Caco-2 (cell line): ENCODE measurements at regions of chr18 and their contacts with region 1.

Region 1: DNA sequence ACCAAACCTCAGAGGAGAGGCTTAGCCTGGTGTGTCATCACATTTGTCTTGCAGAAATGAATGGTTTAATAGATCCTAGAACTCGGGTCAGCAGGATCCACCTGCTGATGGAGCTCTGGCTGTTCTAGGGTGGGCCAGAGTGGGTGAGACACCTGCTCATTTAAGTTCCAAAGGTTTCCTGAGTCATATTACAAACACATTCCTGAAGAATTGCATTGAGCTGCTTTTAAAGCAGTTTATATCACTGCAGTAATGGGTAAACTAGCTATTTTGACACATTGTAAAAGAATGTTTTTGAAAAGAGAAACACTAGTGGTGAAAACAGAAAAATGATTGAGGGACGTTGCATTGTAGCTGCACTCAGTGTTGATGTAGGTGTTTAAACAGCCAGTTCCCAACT is 175.3 kb upstream of the TCF4 start:
- DNase-seq: peak; percentile 60 to 66
- H3K4me3 ChIP-seq: no peak overlapping the region
- H3K4me3 Mint-ChIP-seq: peak overlapping the region; percentile 6
- H3K27ac Mint-ChIP-seq: peak overlapping the region; percentile 81
- H3K4me1 ChIP-seq: peaks cover 42% of the 10 kb centered on the region
- H3K4me1 Mint-ChIP-seq: peaks cover 35% of the 10 kb centered on the region
- H3K27me3 ChIP-seq: no peaks in the 10 kb centered on the region
- H3K27me3 Mint-ChIP-seq: no peaks in the 10 kb centered on the region
- CTCF ChIP-seq: no peak

Region 2: DNA sequence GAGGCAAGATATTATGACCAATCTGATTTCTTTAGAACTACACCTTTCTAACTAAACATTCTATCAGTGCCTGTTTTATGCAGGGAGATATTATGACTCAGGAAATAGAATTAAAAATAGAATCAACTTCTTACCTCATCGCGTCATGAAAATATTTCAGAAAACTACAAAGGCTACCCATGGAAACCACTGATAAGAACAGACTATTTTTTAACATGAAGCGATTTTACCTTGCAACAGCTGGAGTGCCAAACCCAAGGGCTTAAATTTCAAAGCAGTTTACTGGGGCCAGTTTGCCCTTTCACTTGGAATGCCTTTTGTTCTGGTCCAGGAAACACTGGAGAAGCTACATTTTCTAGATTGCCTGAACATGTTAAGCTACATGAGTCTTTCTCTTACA is 499.2 kb before region 1 on chr18:
- CTCF ChIA-PET with region 1: no interaction called
- POLR2A ChIA-PET with region 1: no interaction called
- intact Hi-C with region 1: loop called (anchors 5 kb)
- DNase-seq: peak; percentile 49 to 50
- H3K4me3 ChIP-seq: no peak overlapping the region
- H3K4me3 Mint-ChIP-seq: no peak overlapping the region
- H3K27ac Mint-ChIP-seq: peak overlapping the region; percentile 48
- H3K4me1 ChIP-seq: peaks cover 66% of the 10 kb centered on the region
- H3K4me1 Mint-ChIP-seq: peaks cover 8% of the 10 kb centered on the region
- H3K27me3 ChIP-seq: no peaks in the 10 kb centered on the region
- H3K27me3 Mint-ChIP-seq: no peaks in the 10 kb centered on the region
- CTCF ChIP-seq: no peak

Region 3: GRCh38 chr18:55577812-55578539 is 185.3 kb before region 1 on chr18:
- CTCF ChIA-PET with region 1: no interaction called
- POLR2A ChIA-PET with region 1: no interaction called
- intact Hi-C with region 1: loop called (anchors 5 kb)
- DNase-seq: no peak
- H3K4me3 ChIP-seq: no peak overlapping the region
- H3K4me3 Mint-ChIP-seq: no peak overlapping the region
- H3K27ac Mint-ChIP-seq: no peak overlapping the region
- H3K4me1 ChIP-seq: peaks cover 34% of the 10 kb centered on the region
- H3K4me1 Mint-ChIP-seq: peaks cover 8% of the 10 kb centered on the region
- H3K27me3 ChIP-seq: no peaks in the 10 kb centered on the region
- H3K27me3 Mint-ChIP-seq: no peaks in the 10 kb centered on the region
- CTCF ChIP-seq: peak in 1 of 2 experiments; percentile 16

Region 4: DNA sequence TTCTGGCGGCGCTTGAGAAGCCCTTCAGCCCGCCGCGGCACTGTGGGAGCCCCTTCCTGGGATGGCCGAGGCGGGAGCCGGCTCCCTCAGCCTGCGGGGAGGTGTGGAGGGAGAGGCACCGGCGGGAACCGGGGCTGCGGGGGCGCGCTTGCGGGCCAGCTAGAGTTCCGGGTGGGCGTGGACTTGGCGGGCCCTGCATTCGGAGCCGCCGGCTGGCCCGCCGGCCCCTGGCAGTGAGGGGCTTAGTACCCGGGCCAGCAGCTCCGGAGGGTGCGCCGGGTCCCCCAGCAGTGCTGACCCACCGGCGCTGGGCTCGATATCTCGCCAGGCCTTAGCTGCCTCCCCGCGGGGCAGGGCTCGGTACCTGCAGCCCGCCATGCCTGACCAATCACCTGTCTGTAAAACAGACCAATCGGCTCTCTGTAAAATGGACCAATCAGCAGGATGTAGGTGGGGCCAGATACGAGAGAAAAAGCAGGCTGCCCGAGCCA is 98.5 kb before region 1 on chr18:
- CTCF ChIA-PET with region 1: no interaction called
- POLR2A ChIA-PET with region 1: no interaction called
- intact Hi-C with region 1: loop called (anchors 10 kb)
- DNase-seq: no peak
- H3K4me3 ChIP-seq: no peak overlapping the region
- H3K4me3 Mint-ChIP-seq: no peak overlapping the region
- H3K27ac Mint-ChIP-seq: no peak overlapping the region
- H3K4me1 ChIP-seq: peaks cover 18% of the 10 kb centered on the region
- H3K4me1 Mint-ChIP-seq: peaks cover 12% of the 10 kb centered on the region
- H3K27me3 ChIP-seq: no peaks in the 10 kb centered on the region
- H3K27me3 Mint-ChIP-seq: no peaks in the 10 kb centered on the region
- CTCF ChIP-seq: no peak

Region 5: DNA sequence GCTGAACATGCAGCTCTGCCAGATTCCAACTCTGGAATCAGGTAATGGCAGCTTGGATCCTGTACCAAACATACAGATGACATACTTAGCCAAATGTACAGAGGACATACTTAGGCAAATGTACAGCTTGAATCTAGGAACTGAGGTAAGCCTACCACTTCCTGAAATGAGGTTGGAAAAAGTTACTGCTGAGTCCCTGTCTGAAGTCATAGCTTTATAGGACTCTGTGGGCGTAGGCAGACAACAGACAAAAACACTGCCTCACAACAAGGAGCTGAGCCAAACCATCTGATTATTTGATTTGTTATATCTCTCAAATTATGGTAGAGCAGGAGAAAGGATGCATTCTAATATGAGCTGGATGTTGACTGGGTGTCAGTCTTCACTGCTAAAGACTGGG is 114.9 kb after region 1 on chr18:
- CTCF ChIA-PET with region 1: no interaction called
- POLR2A ChIA-PET with region 1: no interaction called
- intact Hi-C with region 1: no loop called
- DNase-seq: no peak
- H3K4me3 ChIP-seq: no peak overlapping the region
- H3K4me3 Mint-ChIP-seq: no peak overlapping the region
- H3K27ac Mint-ChIP-seq: no peak overlapping the region
- H3K4me1 ChIP-seq: no peaks in the 10 kb centered on the region
- H3K4me1 Mint-ChIP-seq: peaks cover 8% of the 10 kb centered on the region
- H3K27me3 ChIP-seq: no peaks in the 10 kb centered on the region
- H3K27me3 Mint-ChIP-seq: no peaks in the 10 kb centered on the region
- CTCF ChIP-seq: no peak